IMR-90 (cell line): ENCODE measurements at regions of chr10 and their contacts with region 1.

Region 1: GRCh38 chr10:11036407-11037011 is 18.8 kb downstream of the CELF2 start:
- DNase-seq: peak; percentile 62
- ATAC-seq: peak; percentile 86
- H3K4me3 ChIP-seq: no peak overlapping the region
- H3K27ac ChIP-seq: no peak overlapping the region
- H3K4me1 ChIP-seq: no peaks in the 10 kb centered on the region
- H3K27me3 ChIP-seq: peaks cover 2% of the 10 kb centered on the region; the same call in 1 of the 2 replicates
- CTCF ChIP-seq: peak; percentile 71
- POLR2A ChIP-seq: no peak
- RAD21 ChIP-seq: peak; percentile 85

Region 2: DNA sequence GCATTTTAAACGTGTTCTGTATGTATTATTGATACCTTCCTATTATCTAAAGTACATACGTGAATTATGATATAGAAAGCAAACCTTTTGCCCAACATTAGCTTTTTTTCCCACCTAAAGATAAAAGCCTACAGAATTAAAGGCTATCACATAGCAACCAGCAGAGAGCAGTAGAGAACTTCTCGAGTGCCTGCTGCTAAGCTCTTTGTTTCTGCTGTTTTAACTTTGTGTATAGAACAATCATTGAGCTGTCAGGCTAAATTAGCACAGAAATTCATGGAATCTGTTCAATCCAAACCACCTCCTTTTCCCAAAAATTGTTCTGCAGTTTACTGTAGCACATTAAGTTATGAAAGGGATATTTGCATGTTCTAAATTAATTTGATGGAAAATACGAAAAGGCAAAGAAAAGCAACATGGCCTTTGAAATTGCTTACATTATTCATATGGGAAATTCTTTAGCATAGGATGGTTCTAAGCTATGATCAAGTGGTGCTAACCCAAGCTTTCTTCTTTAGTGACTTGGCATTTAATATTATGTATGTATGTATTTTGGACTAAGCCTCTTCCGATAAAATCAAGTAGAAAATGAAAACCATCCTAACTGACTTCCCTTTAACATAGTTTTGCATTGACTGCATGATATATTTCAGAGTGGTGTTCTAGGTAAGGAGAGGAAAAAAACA is 1693.5 kb before region 1 on chr10:
- CTCF ChIA-PET with region 1: interaction called, 3 read pairs
- POLR2A ChIA-PET with region 1: no interaction called
- dilution Hi-C with region 1: no loop called
- in situ Hi-C with region 1: loop called (anchors 10 kb)
- intact Hi-C with region 1: loop called (anchors 2 kb)
- DNase-seq: peak; percentile 42
- ATAC-seq: peak; percentile 85
- H3K4me3 ChIP-seq: no peak overlapping the region
- H3K27ac ChIP-seq: no peak overlapping the region
- H3K4me1 ChIP-seq: no peaks in the 10 kb centered on the region
- H3K27me3 ChIP-seq: no peaks in the 10 kb centered on the region
- CTCF ChIP-seq: peak; percentile 71
- POLR2A ChIP-seq: no peak
- RAD21 ChIP-seq: peak; percentile 73

Region 3: GRCh38 chr10:10092581-10092980 is 943.9 kb before region 1 on chr10:
- CTCF ChIA-PET with region 1: no interaction called
- POLR2A ChIA-PET with region 1: no interaction called
- dilution Hi-C with region 1: no loop called
- in situ Hi-C with region 1: no loop called
- intact Hi-C with region 1: loop called (anchors 10 kb)
- DNase-seq: peak; percentile 21
- ATAC-seq: peak; percentile 86
- H3K4me3 ChIP-seq: no peak overlapping the region
- H3K27ac ChIP-seq: no peak overlapping the region
- H3K4me1 ChIP-seq: no peaks in the 10 kb centered on the region; the same call in 1 of the 2 replicates
- H3K27me3 ChIP-seq: no peaks in the 10 kb centered on the region
- CTCF ChIP-seq: no peak
- POLR2A ChIP-seq: no peak
- RAD21 ChIP-seq: no peak

Region 4: DNA sequence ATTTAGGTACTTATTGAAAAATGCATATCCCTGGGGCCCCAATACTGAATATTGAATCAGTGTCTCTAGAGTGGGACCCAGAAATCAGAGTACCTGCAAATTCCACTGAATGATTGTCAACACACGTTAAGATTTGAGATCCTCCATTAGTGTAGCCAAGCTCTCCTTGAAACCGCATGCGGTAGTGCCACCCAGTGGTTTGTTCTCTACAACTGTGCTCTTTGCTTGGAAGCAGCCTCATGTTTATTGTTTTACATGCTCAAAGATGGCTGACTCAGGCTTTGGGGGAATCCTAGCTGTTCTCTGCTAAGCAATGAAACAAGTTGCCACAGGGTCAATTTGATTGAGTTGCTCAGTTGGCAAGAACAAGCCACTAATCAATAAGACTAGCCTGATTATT is 359.0 kb before region 1 on chr10:
- CTCF ChIA-PET with region 1: interaction called, 11 read pairs
- POLR2A ChIA-PET with region 1: no interaction called
- dilution Hi-C with region 1: no loop called
- in situ Hi-C with region 1: no loop called
- intact Hi-C with region 1: loop called (anchors 2 kb)
- DNase-seq: peak; percentile 80
- ATAC-seq: peak; percentile 95
- H3K4me3 ChIP-seq: no peak overlapping the region
- H3K27ac ChIP-seq: no peak overlapping the region
- H3K4me1 ChIP-seq: no peaks in the 10 kb centered on the region
- H3K27me3 ChIP-seq: no peaks in the 10 kb centered on the region; the same call in 1 of the 2 replicates
- CTCF ChIP-seq: peak; percentile 66
- POLR2A ChIP-seq: no peak
- RAD21 ChIP-seq: peak; percentile 91

Region 5: GRCh38 chr10:11270135-11270857 is 233.8 kb after region 1 on chr10:
- CTCF ChIA-PET with region 1: interaction called, 3 read pairs
- POLR2A ChIA-PET with region 1: no interaction called
- dilution Hi-C with region 1: no loop called
- in situ Hi-C with region 1: no loop called
- intact Hi-C with region 1: loop called (anchors 2 kb)
- DNase-seq: peak; percentile 53
- ATAC-seq: peak; percentile 99
- H3K4me3 ChIP-seq: no peak overlapping the region
- H3K27ac ChIP-seq: no peak overlapping the region
- H3K4me1 ChIP-seq: no peaks in the 10 kb centered on the region
- H3K27me3 ChIP-seq: no peaks in the 10 kb centered on the region; the same call in 1 of the 2 replicates
- CTCF ChIP-seq: peak; percentile 73
- POLR2A ChIP-seq: no peak
- RAD21 ChIP-seq: peak; percentile 83